ENCODE measurements at regions of chr16 and their contacts with region 1.

Region 1: GRCh38 chr16:47141773-47142485 is 1.8 kb downstream of the NETO2 start:
- DNase-seq: peak; percentile 64 to 92 (median 88)
- H3K4me3 ChIP-seq: peak overlapping the region; percentile 29 to 79 (median 66)
- H3K27ac ChIP-seq: peak overlapping the region in 34 of 59 donors; percentile 3 to 88 (median 52)
- H3K27me3 ChIP-seq: no peaks in the 10 kb centered on the region
- CTCF ChIP-seq: peak; percentile 72 to 97 (median 91)

Region 2: DNA sequence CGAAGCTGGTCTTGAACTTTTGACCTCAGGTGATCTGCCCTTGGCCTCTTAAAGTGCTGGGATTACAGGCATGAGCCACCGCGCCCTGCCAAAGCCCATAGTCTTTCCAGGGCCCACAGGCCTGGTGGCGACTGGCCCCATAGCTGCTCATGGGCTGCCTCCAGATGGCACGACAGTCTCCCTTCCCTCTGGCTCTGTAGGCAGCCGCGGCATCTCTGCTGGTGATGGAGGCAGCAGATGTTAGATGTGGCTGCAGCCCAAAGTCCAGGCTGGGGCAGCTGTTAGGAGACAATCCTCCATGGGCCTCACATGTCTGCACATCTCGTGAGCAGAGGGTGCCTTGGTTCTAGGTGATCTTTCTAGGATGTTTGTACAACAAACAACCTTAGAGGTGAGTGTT is 98.7 kb before region 1 on chr16:
- intact Hi-C with region 1: loop called in 1 of 2 experiments (anchors 2 kb)
- DNase-seq: peak in 5 of 10 donors; percentile 24 to 51 (median 39)
- H3K4me3 ChIP-seq: no peak overlapping the region
- H3K27ac ChIP-seq: peak overlapping the region in 5 of 59 donors; percentile 4 to 37 (median 24)
- H3K27me3 ChIP-seq: no peaks in the 10 kb centered on the region
- CTCF ChIP-seq: no peak

Region 3: GRCh38 chr16:48054881-48055601 is 913.1 kb after region 1 on chr16:
- intact Hi-C with region 1: loop called (anchors 2 to 5 kb)
- DNase-seq: peak; percentile 44 to 82 (median 73)
- H3K4me3 ChIP-seq: peak overlapping the region; percentile 12 to 72 (median 51)
- H3K27ac ChIP-seq: peak overlapping the region; percentile 41 to 96 (median 88)
- H3K27me3 ChIP-seq: no peaks in the 10 kb centered on the region
- CTCF ChIP-seq: peak; percentile 67 to 92 (median 86)

Region 4: DNA sequence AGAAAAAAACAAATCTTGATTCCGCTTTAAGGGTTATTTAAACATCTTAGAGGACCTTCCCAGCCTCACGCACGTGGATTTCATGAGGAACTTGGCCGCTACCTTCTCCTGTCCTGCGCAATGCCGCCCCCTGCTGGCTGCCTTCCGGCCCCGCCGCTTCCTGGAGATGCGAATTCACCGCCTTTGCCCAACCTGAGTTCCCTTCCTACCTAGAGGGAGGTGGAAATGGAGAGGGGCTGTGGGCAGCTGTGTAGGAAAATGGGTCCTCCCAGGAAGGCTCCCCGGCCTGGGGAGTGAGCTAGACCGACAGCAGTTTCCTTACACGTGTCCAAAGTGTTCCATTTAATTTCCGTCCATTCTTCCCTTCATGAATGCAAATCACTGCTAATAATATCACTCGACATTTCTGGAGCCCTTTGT is 1014.9 kb after region 1 on chr16:
- intact Hi-C with region 1: loop called (anchors 2 kb)
- DNase-seq: peak; percentile 75 to 93 (median 84)
- H3K4me3 ChIP-seq: peak overlapping the region in 46 of 59 donors; percentile 3 to 55 (median 41)
- H3K27ac ChIP-seq: no peak overlapping the region
- H3K27me3 ChIP-seq: no peaks in the 10 kb centered on the region
- CTCF ChIP-seq: peak; percentile 80 to 99 (median 97)

Region 5: GRCh38 chr16:48623304-48624016 is 1481.5 kb after region 1 on chr16:
- intact Hi-C with region 1: loop called in 1 of 2 experiments (anchors 10 kb)
- DNase-seq: peak; percentile 56 to 88 (median 74)
- H3K4me3 ChIP-seq: peak overlapping the region; percentile 7 to 72 (median 54)
- H3K27ac ChIP-seq: peak overlapping the region in 46 of 59 donors; percentile 3 to 88 (median 57)
- H3K27me3 ChIP-seq: no peaks in the 10 kb centered on the region
- CTCF ChIP-seq: peak; percentile 86 to 98 (median 95)